Pancreas (tissue), 10 donors: ENCODE measurements at regions of chr19 and their contacts with region 1.

Region 1: DNA sequence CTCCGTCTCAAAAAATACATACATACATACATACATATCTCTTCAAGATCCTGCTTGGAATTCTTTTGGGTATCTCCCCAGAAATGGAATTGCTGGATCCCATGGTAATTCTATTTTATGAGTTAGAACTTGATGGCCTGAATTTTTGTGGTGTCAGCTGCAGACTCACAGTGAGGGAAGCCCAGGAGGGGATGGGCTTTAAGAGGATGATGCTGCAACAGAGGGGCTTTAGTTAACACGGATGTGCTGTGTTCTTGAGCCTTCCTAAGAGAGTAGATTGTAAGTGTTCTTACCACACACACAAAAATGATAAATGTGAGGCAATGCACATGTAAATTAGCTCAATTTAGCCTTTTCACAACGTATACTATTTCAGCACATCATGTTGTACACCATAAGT is 31.8 kb downstream of the CACNG6 start:
- DNase-seq: no peak
- ATAC-seq: no peak
- H3K4me3 ChIP-seq: no peak overlapping the region
- H3K27ac ChIP-seq: no peak overlapping the region
- H3K4me1 ChIP-seq: no peaks in the 10 kb centered on the region
- H3K27me3 ChIP-seq: peaks cover 0 to 8% (median 0%) of the 10 kb centered on the region in 4 donors
- CTCF ChIP-seq: no peak

Region 2: DNA sequence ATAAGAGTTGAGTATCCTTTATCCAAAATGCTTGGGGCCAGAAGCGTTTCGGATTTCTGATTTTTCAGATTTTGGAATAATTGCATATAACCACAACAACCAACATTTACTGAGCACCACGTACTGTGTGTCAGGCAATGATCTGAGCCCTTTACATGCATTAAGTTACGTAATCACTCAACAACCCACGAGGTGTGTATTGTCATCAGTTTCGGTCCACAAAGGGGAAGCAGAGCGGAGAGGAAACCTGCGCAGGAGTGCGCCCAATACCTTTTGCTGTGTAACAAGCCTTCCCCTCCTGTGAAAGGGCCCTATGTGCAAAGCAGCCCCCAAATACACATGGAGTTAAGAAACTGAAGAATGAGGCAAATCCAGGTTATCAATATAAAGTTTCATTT is 178.3 kb before region 1 on chr19:
- intact Hi-C with region 1: loop called in 1 of 3 experiments (anchors 5 kb)
- DNase-seq: no peak
- ATAC-seq: no peak
- H3K4me3 ChIP-seq: no peak overlapping the region
- H3K27ac ChIP-seq: no peak overlapping the region
- H3K4me1 ChIP-seq: peaks cover 0 to 6% (median 0%) of the 10 kb centered on the region in 3 donors
- H3K27me3 ChIP-seq: no peaks in the 10 kb centered on the region
- CTCF ChIP-seq: no peak